Upper lobe of right lung (tissue), 1 donor: ENCODE measurements at regions of chr3 and their contacts with region 1.

Region 1: GRCh38 chr3:141006344-141006743 is 44.8 kb upstream of the SPSB4 start:
- DNase-seq: no peak
- ATAC-seq: no peak
- H3K4me3 ChIP-seq: no peak overlapping the region
- H3K27ac ChIP-seq: no peak overlapping the region
- H3K4me1 ChIP-seq: no peaks in the 10 kb centered on the region
- H3K27me3 ChIP-seq: no peaks in the 10 kb centered on the region
- CTCF ChIP-seq: no peak

Region 2: GRCh38 chr3:140898340-140899180 is 107.8 kb before region 1 on chr3:
- intact Hi-C with region 1: no loop called
- DNase-seq: no peak
- ATAC-seq: peak; percentile 92
- H3K4me3 ChIP-seq: no peak overlapping the region
- H3K27ac ChIP-seq: no peak overlapping the region
- H3K4me1 ChIP-seq: no peaks in the 10 kb centered on the region
- H3K27me3 ChIP-seq: no peaks in the 10 kb centered on the region
- CTCF ChIP-seq: peak; percentile 63

Region 3: GRCh38 chr3:141063831-141064230 is 57.5 kb after region 1 on chr3:
- intact Hi-C with region 1: no loop called
- DNase-seq: peak; percentile 32
- ATAC-seq: no peak
- H3K4me3 ChIP-seq: no peak overlapping the region
- H3K27ac ChIP-seq: no peak overlapping the region
- H3K4me1 ChIP-seq: no peaks in the 10 kb centered on the region
- H3K27me3 ChIP-seq: no peaks in the 10 kb centered on the region
- CTCF ChIP-seq: no peak

Region 4: DNA sequence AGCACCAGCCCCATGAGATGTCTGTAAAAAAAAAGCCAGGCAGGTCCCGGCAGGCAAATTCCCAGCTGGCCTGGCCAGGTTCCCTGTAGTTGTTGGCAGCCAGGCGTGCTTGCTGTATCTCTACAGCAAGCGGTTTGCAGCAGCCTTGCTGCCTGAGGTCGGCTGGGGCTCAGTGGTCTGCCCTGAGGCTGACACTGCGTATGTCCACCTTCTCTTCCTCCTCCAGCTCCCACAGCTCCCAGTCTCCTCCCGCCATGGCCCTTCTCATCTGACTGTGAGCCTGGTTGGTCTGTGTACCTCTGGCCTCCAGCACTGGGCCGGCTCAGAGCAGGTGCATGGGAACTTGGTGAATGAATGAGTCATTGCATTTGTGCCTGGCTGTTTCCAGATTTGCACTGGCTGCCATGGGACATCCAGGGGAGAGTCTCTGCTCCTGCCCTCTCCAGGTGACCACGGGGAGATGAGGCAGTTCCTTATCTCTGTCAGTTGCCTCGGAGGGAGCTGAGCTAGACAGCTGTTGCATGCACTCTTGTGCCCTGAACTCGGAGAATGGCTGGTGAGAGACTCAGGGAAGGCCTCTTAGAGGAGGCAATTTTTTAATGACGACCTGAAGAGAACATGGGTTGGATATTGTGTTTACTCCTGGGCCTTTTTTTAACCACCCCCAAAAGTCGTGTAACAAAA is 87.8 kb after region 1 on chr3:
- intact Hi-C with region 1: no loop called
- DNase-seq: peak; percentile 60
- ATAC-seq: no peak
- H3K4me3 ChIP-seq: no peak overlapping the region
- H3K27ac ChIP-seq: no peak overlapping the region
- H3K4me1 ChIP-seq: no peaks in the 10 kb centered on the region
- H3K27me3 ChIP-seq: no peaks in the 10 kb centered on the region
- CTCF ChIP-seq: no peak

Region 5: GRCh38 chr3:141192345-141192744 is 186.0 kb after region 1 on chr3:
- intact Hi-C with region 1: loop called (anchors 5 kb)
- DNase-seq: peak; percentile 97
- ATAC-seq: peak; percentile 100
- H3K4me3 ChIP-seq: no peak overlapping the region
- H3K27ac ChIP-seq: no peak overlapping the region
- H3K4me1 ChIP-seq: no peaks in the 10 kb centered on the region
- H3K27me3 ChIP-seq: peaks cover 6% of the 10 kb centered on the region
- CTCF ChIP-seq: peak; percentile 99

Region 6: GRCh38 chr3:141370065-141370533 is 363.8 kb after region 1 on chr3:
- intact Hi-C with region 1: no loop called
- DNase-seq: no peak
- ATAC-seq: peak; percentile 73
- H3K4me3 ChIP-seq: peak overlapping the region; percentile 42
- H3K27ac ChIP-seq: peak overlapping the region; percentile 90
- H3K4me1 ChIP-seq: peaks cover 51% of the 10 kb centered on the region
- H3K27me3 ChIP-seq: no peaks in the 10 kb centered on the region
- CTCF ChIP-seq: peak; percentile 41